Heart left ventricle (tissue), 16 donors: ENCODE measurements at regions of chr11 and their contacts with region 1.

Region 1: DNA sequence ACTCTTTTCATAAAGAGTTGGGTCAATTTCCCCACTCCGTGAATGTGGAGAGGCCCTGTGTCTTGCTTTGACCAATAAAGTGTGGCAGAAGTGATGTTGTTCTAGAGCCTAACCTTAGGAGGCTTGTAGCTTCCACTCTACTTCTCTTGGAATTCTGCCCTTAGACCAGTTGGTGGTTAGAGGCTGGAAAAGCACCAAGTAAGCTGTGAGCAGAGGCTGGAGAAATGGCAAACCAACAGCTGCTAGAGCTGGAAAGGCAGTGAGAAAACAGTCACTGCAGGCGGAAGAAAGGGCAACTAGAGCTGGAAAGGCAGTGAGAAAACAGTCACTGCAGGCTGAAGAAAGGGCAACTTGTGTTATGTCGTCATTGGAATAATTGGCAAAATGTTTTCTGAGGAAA is 29.8 kb upstream of the MSANTD2 start:
- DNase-seq: no peak
- ATAC-seq: no peak
- H3K4me3 ChIP-seq: no peak overlapping the region
- H3K27ac ChIP-seq: no peak overlapping the region
- H3K4me1 ChIP-seq: no peaks in the 10 kb centered on the region
- H3K27me3 ChIP-seq: peaks cover 0 to 14% (median 0%) of the 10 kb centered on the region in 9 donors
- CTCF ChIP-seq: no peak
- POLR2A ChIP-seq: no peak

Region 2: DNA sequence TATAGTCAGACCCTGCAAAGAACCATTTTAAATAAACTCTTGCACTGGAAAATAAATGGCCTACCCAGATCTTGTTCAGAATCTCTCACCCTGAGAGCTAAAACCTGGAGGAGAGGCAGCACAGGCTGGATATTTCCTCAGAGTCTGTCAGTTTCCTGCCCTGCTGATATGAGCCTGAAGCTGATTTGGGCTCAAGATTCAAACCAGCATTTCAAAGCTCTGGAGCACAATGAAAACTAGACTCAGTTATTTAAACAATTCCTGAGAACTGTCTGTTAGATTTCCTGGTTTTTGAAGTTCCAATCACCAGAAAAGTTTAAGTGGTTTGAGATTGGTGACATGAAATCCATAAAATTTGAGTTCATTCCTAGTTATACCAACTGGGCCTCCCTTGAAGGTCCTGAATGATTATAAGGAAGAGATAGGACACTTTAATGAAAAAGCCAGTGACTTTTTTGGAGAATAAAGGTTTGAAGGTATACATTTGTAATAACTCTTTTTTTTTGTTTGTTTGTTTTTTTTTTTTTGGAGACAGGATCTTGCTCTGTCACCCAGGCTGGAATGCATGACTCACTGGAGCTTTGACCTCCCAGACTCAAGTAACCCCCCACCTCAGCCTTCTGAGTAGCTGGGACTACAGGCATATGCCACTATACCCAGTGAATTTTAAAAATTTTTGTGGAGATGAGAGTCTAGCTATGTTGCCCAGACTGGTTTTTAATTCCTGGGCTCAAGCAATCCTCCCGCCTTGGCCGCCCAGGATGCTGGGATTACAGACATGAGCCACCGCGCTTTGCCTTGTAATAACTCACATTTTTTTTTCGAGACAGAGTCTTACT is 60.0 kb before region 1 on chr11:
- intact Hi-C with region 1: loop called in 2 of 10 experiments (anchors 5 to 10 kb)
- DNase-seq: no peak
- ATAC-seq: no peak
- H3K4me3 ChIP-seq: no peak overlapping the region
- H3K27ac ChIP-seq: no peak overlapping the region
- H3K4me1 ChIP-seq: no peaks in the 10 kb centered on the region
- H3K27me3 ChIP-seq: no peaks in the 10 kb centered on the region
- CTCF ChIP-seq: no peak
- POLR2A ChIP-seq: no peak